Activated naive CD4-positive, alpha-beta T cell treated with anti-CD3 and anti-CD28 coated beads for 36 hours (primary cell): ENCODE measurements at regions of chr7 and their contacts with region 1.

Region 1: GRCh38 chr7:152383341-152384234 is 52.2 kb downstream of the KMT2C start:
- DNase-seq: peak; percentile 38
- H3K4me3 Mint-ChIP-seq: no peak overlapping the region
- H3K27ac Mint-ChIP-seq: no peak overlapping the region
- H3K4me1 Mint-ChIP-seq: peaks cover 25% of the 10 kb centered on the region
- H3K27me3 Mint-ChIP-seq: no peaks in the 10 kb centered on the region

Region 2: GRCh38 chr7:152424348-152425108 is 40.9 kb after region 1 on chr7:
- CTCF ChIA-PET with region 1: no interaction called
- intact Hi-C with region 1: loop called (anchors 5 kb)
- DNase-seq: peak; percentile 45
- H3K4me3 Mint-ChIP-seq: no peak overlapping the region
- H3K27ac Mint-ChIP-seq: peak overlapping the region; percentile 72
- H3K4me1 Mint-ChIP-seq: peaks cover 71% of the 10 kb centered on the region
- H3K27me3 Mint-ChIP-seq: no peaks in the 10 kb centered on the region

Region 3: GRCh38 chr7:152597512-152597911 is 213.9 kb after region 1 on chr7:
- CTCF ChIA-PET with region 1: no interaction called
- intact Hi-C with region 1: no loop called
- DNase-seq: no peak
- H3K4me3 Mint-ChIP-seq: no peak overlapping the region
- H3K27ac Mint-ChIP-seq: no peak overlapping the region
- H3K4me1 Mint-ChIP-seq: no peaks in the 10 kb centered on the region
- H3K27me3 Mint-ChIP-seq: no peaks in the 10 kb centered on the region